ENCODE measurements at regions of chr5 and their contacts with region 1.

Region 1: DNA sequence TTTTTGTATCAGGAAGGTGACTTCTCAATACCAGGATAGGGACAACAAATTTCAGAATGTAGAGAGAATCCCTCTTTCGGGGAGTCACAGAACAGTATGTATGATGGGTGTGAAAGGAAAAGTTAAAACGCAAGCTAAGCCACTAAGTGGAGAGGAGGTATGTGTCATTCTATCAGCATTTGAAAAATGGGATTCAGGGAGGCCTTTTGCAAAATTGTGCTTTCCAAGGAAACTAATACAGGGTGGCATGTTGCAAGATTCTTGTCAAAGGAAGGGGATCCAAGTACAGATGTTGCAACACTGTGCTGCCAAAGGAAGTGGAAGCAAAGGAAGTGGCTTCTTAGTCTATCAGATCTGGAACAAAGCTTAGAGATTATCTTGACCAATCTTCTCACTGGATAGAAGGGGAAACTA is 12.6 kb upstream of the TNIP1 start:
- DNase-seq: no peak
- ATAC-seq: peak; percentile 2; the same call in 2 of the 3 replicates
- H3K4me3 ChIP-seq: peak overlapping the region; percentile 53
- H3K27ac ChIP-seq: peak overlapping the region; percentile 98
- H3K4me1 ChIP-seq: peaks cover 59% of the 10 kb centered on the region
- H3K27me3 ChIP-seq: no peaks in the 10 kb centered on the region
- CTCF ChIP-seq: no peak
- EP300 ChIP-seq: no peak
- POLR2A ChIP-seq: no peak
- RAD21 ChIP-seq: no peak

Region 2: DNA sequence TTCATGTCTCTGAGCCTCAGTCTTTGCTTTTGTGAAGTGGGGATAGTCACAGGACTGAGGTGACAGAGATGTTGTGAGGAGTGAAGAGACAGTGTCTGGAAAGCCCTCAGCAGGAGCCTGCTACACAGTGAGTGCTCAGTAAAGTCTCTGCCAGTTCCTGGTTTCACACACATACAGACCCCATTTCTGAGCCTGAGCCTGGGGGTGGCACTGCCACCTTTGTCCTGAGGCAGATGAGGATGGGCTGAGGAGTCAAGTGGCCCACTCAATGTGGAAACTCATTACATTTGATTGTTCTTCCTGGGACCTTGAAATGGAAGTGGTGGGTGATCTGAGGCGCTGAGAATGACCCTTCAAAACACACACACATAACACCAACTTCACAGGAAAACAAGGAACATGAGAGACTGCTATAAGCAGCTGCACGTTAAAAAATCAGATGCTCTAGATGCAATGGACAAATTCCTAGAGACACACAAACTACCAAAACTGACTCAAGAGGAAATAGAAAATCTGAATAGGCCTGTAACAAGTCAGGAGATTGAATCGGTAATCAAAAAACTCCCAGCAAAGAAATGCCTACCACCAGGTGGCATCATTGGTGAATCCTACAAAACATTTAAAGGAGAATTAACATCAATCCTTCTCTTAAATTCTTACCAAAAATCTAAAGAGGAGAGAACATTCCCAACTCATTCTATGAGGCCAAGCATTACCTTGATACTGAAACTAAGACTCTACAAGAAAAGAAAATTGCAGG is 530.8 kb before region 1 on chr5:
- CTCF ChIA-PET with region 1: no interaction called
- POLR2A ChIA-PET with region 1: no interaction called
- RAD21 ChIA-PET with region 1: no interaction called
- SMC1A ChIA-PET with region 1: no interaction called
- in situ Hi-C with region 1: no loop called
- intact Hi-C with region 1: no loop called
- DNase-seq: peak; percentile 27
- ATAC-seq: peak; percentile 22; the same call in 1 of the 3 replicates
- H3K4me3 ChIP-seq: no peak overlapping the region
- H3K27ac ChIP-seq: no peak overlapping the region
- H3K4me1 ChIP-seq: peaks cover under 1% of the 10 kb centered on the region; the same call in 1 of the 2 replicates
- H3K27me3 ChIP-seq: no peaks in the 10 kb centered on the region
- CTCF ChIP-seq: peak; percentile 50 to 64 (median 53); a peak in 5 of 6 replicates
- EP300 ChIP-seq: no peak
- POLR2A ChIP-seq: no peak
- RAD21 ChIP-seq: peak; percentile 64

Region 3: GRCh38 chr5:150862070-150862469 is 231.4 kb before region 1 on chr5:
- CTCF ChIA-PET with region 1: no interaction called
- POLR2A ChIA-PET with region 1: no interaction called
- RAD21 ChIA-PET with region 1: no interaction called
- SMC1A ChIA-PET with region 1: no interaction called
- in situ Hi-C with region 1: no loop called
- intact Hi-C with region 1: no loop called
- DNase-seq: no peak
- ATAC-seq: no peak
- H3K4me3 ChIP-seq: no peak overlapping the region
- H3K27ac ChIP-seq: no peak overlapping the region
- H3K4me1 ChIP-seq: no peaks in the 10 kb centered on the region
- H3K27me3 ChIP-seq: no peaks in the 10 kb centered on the region
- CTCF ChIP-seq: no peak
- EP300 ChIP-seq: no peak
- POLR2A ChIP-seq: no peak
- RAD21 ChIP-seq: no peak

Region 4: DNA sequence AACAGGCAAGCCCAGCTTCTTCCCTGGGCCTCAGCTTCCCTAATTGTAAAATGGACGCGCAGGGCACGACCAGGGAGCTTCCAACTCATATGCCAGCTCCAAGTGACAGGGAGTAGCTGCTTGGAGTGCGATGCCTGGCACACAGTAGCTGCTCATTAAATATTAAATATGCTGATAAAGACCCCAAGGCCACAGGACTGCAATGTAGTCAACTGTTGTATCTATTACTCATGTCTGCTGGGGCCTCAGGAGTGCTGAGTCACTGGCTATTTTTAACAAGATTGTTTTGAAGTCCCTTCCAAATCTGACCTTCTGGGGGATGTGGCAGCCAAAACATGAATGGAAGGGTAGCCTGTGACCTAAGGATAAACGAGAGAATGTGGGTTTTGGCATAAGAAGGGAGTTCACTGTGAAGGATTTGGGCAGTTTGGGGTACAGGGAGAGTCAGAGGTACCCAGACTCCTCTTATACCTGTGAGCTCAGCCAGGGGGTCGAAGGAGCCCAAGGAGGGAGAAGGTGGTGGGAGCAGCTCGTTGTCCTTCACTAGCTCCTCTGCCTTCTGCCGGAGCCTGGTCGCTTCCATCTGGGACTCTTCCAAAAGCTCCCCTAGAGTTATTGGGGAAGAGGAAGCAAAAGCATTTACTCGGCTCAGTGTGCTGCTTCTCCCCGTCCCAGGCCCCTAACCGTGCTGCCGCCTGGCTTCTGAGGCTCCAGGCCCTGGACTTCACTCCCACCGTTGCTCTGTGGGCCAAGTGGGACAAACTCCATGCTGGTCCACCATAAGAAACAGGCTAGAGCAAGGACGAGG is 30.1 kb before region 1 on chr5:
- CTCF ChIA-PET with region 1: interaction called, 11 read pairs
- POLR2A ChIA-PET with region 1: interaction called, 7 read pairs
- RAD21 ChIA-PET with region 1: interaction called, 6 read pairs
- SMC1A ChIA-PET with region 1: interaction called, 31 read pairs
- in situ Hi-C with region 1: no loop called
- intact Hi-C with region 1: no loop called
- DNase-seq: no peak
- ATAC-seq: no peak
- H3K4me3 ChIP-seq: no peak overlapping the region
- H3K27ac ChIP-seq: no peak overlapping the region; the same call in 1 of the 2 replicates
- H3K4me1 ChIP-seq: peaks cover 82% of the 10 kb centered on the region
- H3K27me3 ChIP-seq: no peaks in the 10 kb centered on the region
- CTCF ChIP-seq: no peak
- EP300 ChIP-seq: no peak
- POLR2A ChIP-seq: no peak; the same call in 1 of the 2 replicates
- RAD21 ChIP-seq: no peak

Region 5: GRCh38 chr5:151068433-151069197 is 24.9 kb before region 1 on chr5:
- CTCF ChIA-PET with region 1: interaction called, 4 read pairs
- POLR2A ChIA-PET with region 1: interaction called, 222 read pairs
- RAD21 ChIA-PET with region 1: interaction called, 3 read pairs
- SMC1A ChIA-PET with region 1: interaction called, 31 read pairs
- in situ Hi-C with region 1: no loop called
- intact Hi-C with region 1: no loop called
- DNase-seq: no peak
- ATAC-seq: peak; percentile 78
- H3K4me3 ChIP-seq: peak overlapping the region; percentile 6; the same call in 1 of the 2 replicates
- H3K27ac ChIP-seq: peak overlapping the region; percentile 65
- H3K4me1 ChIP-seq: peaks cover 77% of the 10 kb centered on the region
- H3K27me3 ChIP-seq: no peaks in the 10 kb centered on the region
- CTCF ChIP-seq: no peak
- EP300 ChIP-seq: peak in 1 of 2 experiments; percentile 16; a peak in 1 of 4 replicates
- POLR2A ChIP-seq: no peak; the same call in none of the 2 replicates
- RAD21 ChIP-seq: no peak

Region 6: GRCh38 chr5:151110122-151110681 is 16.7 kb after region 1 on chr5:
- CTCF ChIA-PET with region 1: interaction called, 90 read pairs
- POLR2A ChIA-PET with region 1: interaction called, 13 read pairs
- RAD21 ChIA-PET with region 1: interaction called, 45 read pairs
- SMC1A ChIA-PET with region 1: interaction called, 66 read pairs
- in situ Hi-C with region 1: no loop called
- intact Hi-C with region 1: no loop called
- DNase-seq: no peak
- ATAC-seq: peak; percentile 69
- H3K4me3 ChIP-seq: no peak overlapping the region
- H3K27ac ChIP-seq: peak overlapping the region; percentile 72
- H3K4me1 ChIP-seq: peaks cover 25% of the 10 kb centered on the region
- H3K27me3 ChIP-seq: no peaks in the 10 kb centered on the region
- CTCF ChIP-seq: no peak; a peak in 3 of 6 replicates
- EP300 ChIP-seq: no peak
- POLR2A ChIP-seq: no peak; the same call in 1 of the 2 replicates
- RAD21 ChIP-seq: peak; percentile 42

Region 7: GRCh38 chr5:151758430-151759241 is 665.2 kb after region 1 on chr5 and contains the start of gene ATOX1:
- CTCF ChIA-PET with region 1: no interaction called
- POLR2A ChIA-PET with region 1: interaction called, 10 read pairs
- RAD21 ChIA-PET with region 1: no interaction called
- SMC1A ChIA-PET with region 1: no interaction called
- in situ Hi-C with region 1: no loop called
- intact Hi-C with region 1: no loop called
- DNase-seq: peak; percentile 58
- ATAC-seq: peak; percentile 96
- H3K4me3 ChIP-seq: peak within 1 kb of the TSS; percentile 98
- H3K27ac ChIP-seq: peak within 1 kb of the TSS; percentile 86
- H3K4me1 ChIP-seq: peaks cover 23% of the 10 kb centered on the region
- H3K27me3 ChIP-seq: no peaks in the 10 kb centered on the region
- CTCF ChIP-seq: peak in 1 of 3 experiments; percentile 9; a peak in 1 of 6 replicates
- EP300 ChIP-seq: no peak
- POLR2A ChIP-seq: peak; percentile 100
- RAD21 ChIP-seq: no peak
- polyA plus RNA-seq, gene ATOX1: 576 to 642 TPM

Measured in GM12878 (cell line).